ENCODE measurements at regions of chr15 and their contacts with region 1.

Region 1: DNA sequence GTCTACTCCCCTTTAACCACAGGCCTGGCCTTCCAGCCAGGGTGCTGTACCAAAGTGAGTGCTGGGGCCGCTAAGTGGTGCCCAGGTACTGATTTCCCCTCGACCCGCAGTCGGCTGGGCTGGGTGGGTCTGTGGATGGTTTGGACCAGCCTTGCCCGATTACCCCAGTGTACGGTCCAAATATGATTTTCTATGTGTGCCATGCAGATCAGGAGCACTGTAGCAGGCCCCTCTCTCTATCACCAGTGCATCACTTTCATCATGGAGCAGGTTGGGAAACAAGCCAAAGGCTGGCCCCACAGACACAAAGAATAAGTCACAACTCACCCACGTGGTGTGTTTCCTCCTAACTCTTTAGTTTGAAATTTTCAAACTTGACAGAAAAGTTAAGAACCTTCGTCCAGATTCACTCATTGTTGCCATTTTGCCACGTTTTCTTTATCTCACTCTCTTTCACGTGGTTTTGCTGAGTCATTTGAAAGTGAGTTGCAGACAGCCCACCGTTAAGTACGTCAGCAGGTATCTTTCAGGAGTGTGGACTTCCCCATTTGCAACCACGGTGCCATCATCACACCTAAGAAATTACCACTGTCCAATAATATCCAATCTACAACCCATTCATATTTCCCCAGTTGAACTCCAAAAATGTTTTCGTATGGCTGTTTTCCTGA is 37.0 kb downstream of the ZNF710 start:
- DNase-seq: peak; percentile 82
- ATAC-seq: peak; percentile 82
- H3K4me3 Mint-ChIP-seq: peak overlapping the region; percentile 6
- H3K27ac Mint-ChIP-seq: peak overlapping the region; percentile 95
- H3K4me1 Mint-ChIP-seq: peaks cover 79% of the 10 kb centered on the region
- H3K27me3 Mint-ChIP-seq: no peaks in the 10 kb centered on the region

Region 2: DNA sequence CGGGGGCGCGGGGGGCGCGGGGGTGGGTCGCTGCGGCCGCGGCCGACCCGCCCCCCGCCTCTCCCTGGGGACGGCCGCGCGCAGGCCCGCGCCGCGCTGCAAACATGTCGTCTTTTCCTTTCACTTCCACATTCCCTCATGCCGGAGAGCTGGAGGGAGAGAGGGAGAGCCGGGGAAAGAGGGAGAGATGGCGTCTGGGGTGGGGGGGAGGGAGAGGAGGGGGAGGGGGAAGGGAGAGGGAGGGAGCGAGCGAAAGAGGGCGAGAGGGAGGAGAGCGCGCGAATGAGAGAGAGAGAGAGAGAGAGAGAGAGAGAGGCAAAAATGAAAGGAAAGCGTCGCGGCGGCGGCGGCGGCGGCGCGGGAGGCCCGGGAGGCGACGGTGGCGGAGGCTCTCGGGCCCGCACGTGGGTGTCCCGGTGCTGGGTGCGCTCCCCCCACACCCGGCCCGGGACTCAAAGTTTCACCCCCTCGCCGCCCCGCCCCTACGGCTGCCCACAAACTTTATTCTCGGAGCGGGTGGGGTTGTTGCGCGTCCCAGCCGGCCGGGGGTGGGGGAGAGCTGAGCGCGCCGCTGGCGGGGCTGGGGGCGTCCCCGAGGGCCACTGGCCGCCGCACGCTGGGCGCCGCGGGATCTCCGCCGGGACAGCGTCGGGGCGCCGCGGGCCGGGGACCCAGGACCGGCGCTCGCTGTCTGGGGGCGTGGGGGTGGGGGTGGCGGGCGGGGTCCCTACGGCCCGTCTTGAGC is 36.2 kb before region 1 on chr15:
- CTCF ChIA-PET with region 1: interaction called, 3 read pairs
- POLR2A ChIA-PET with region 1: no interaction called
- intact Hi-C with region 1: loop called (anchors 1 kb)
- DNase-seq: peak; percentile 77
- ATAC-seq: peak; percentile 27
- H3K4me3 Mint-ChIP-seq: peak overlapping the region; percentile 82
- H3K27ac Mint-ChIP-seq: peak overlapping the region; percentile 88
- H3K4me1 Mint-ChIP-seq: peaks cover 61% of the 10 kb centered on the region
- H3K27me3 Mint-ChIP-seq: no peaks in the 10 kb centered on the region

Measured in activated CD4-positive, alpha-beta T cell treated with anti-CD3 and anti-CD28 coated beads for 36 hours (primary cell).